Caki2 (cell line): ENCODE measurements at regions of chr6 and their contacts with region 1.

Region 1: DNA sequence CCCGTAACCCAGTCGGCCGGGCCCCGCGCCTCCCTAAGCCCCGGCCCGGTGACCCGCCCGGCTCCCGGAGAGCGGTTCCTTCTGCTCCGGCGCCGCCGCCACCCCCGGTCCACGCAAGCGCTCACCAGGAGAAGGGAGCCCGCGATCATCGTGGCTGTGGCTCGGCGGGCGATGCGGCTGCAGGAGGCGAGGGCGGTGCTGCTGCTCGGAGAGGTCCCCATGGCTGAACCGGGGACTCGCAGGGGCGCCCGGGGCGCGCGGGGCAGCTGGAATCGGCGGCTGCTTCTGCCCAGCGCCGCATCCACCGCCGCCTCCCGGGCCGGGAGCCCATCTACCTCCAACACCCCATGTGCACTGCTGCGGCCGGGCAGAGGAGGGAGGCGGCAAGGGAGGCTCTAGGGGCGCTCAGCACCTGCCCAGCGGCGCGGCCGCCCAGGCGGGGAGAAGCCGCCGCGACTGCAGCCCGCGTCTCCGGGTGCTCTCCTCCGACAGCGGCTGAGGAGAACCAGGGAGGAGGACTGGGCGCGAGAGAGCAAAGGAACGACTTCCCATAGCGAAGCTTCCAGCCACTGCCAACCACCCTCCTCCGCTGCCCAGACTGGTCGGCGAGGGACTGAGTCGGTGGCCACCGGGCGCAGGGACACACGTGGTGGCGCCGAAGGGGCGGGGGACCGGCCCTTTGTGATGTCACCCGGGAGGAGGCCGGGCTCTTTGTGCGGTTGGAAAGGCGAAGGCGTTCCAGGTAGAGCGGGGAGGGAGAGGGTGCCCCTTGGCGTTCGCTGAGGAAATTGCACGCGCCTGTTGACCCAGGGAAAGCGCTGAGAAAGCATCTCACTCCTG is at the start of gene TNFRSF21:
- DNase-seq: peak; percentile 95
- total RNA-seq, gene TNFRSF21: 13.1 and 13.5 TPM in 2 replicates

Region 2: DNA sequence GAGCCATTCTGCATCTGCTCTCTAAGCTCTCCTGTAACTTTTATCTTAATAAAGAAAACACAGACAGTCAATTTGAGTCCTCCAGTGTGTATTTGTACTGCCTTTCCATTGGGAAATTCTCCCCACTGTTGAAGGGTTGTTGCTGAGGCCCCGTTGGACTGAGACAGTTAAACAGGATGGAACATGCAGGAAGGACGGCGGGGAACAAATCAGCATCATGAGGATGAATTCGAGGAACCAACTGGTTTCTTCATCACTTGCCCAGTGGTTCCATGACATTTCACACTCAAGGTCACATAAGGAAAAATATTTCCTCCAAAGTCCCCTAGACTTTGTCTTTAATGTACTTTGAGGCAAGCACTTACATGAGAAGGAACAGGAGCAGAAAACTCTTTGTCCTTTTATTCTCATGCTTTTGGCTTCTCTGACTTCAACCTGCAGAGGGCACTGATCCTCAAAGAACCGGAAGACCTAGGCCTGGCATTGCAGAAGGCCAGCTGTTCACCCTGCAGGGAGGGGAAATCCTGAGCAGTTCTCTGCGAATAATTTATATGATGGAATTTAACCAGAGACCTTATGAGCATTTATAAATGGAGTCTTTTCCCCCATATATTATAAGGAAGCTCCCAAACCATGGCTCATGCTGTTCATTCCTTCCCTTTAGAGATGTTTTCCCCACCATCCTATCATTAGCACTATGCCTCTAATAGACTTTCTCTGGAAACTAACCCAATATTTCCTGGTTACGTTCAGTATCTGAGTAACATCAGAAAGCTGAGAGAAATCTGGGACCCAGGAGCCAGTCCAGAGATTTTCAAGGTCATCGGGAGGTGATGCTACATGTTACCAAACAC is 212.2 kb before region 1 on chr6:
- in situ Hi-C with region 1: loop called (anchors 5 kb)
- DNase-seq: peak; percentile 73

Region 3: DNA sequence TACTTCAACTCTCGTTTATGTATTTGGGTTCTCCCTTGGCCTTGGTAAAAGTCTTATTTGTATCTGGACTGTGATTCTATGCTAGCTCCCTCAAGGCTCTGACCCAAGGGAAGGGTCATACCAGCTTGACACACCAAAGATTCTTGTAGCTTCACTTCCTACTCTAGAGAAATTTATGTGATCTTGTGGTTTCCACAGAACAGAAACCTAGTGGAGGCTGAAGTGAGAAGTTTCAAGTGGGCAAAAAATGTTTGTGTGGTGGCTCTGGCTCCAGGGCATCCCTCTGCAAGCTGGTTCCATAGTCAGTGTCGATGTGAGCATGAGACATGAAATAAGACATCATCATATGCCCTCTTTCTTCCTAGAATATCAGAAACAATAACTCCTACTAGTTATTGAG is 48.3 kb after region 1 on chr6:
- in situ Hi-C with region 1: no loop called
- DNase-seq: no peak